ENCODE measurements at regions of chr1 and their contacts with region 1.

Region 1: GRCh38 chr1:10694633-10695627 is 101.5 kb downstream of the CASZ1 start:
- DNase-seq: peak; percentile 90 to 91
- ATAC-seq: peak; percentile 23 to 92 (median 77)
- H3K4me3 ChIP-seq: peak overlapping the region; percentile 21 to 62 (median 56)
- H3K27ac ChIP-seq: peak overlapping the region; percentile 75 to 92 (median 88)
- H3K4me1 ChIP-seq: peaks cover 16 to 66% (median 46%) of the 10 kb centered on the region in 9 donors
- H3K27me3 ChIP-seq: peaks cover 0 to 3% (median 0%) of the 10 kb centered on the region in 7 donors
- CTCF ChIP-seq: no peak

Region 2: DNA sequence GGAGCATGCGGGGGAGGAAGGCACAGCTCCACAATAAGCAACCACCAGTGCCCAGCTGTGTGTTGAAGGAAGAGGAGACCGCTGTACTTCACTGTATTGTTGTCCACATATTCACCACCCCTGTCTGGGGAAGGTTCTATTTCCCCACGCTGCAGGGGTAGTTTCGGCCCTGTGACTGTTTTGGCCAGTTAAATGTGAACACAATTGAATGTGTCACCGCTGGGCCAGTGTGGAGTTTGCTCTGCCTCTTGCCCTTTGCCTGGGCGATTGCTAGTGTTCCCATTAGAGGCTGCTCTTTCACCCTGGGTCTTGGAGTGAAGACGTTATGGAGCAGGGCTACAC is 629.6 kb before region 1 on chr1:
- intact Hi-C with region 1: loop called in 1 of 10 experiments (anchors 10 kb)
- DNase-seq: peak in 1 of 2 donors; percentile 10
- ATAC-seq: peak; percentile 30 to 73 (median 44)
- H3K4me3 ChIP-seq: no peak overlapping the region
- H3K27ac ChIP-seq: peak overlapping the region; percentile 5 to 95 (median 64)
- H3K4me1 ChIP-seq: peaks cover 20 to 66% (median 49%) of the 10 kb centered on the region in 9 donors
- H3K27me3 ChIP-seq: no peaks in the 10 kb centered on the region
- CTCF ChIP-seq: no peak

Region 3: GRCh38 chr1:10652626-10653025 is 42.3 kb before region 1 on chr1:
- intact Hi-C with region 1: loop called in 1 of 10 experiments (anchors 1 kb)
- DNase-seq: no peak
- ATAC-seq: no peak
- H3K4me3 ChIP-seq: no peak overlapping the region
- H3K27ac ChIP-seq: no peak overlapping the region
- H3K4me1 ChIP-seq: peaks cover 0 to 10% (median 0%) of the 10 kb centered on the region in 9 donors
- H3K27me3 ChIP-seq: no peaks in the 10 kb centered on the region
- CTCF ChIP-seq: no peak

Region 4: GRCh38 chr1:10765734-10766478 is 71.0 kb after region 1 on chr1:
- intact Hi-C with region 1: loop called in 1 of 10 experiments (anchors 5 kb)
- DNase-seq: peak in 1 of 2 donors; percentile 38
- ATAC-seq: peak in 6 of 8 donors; percentile 17 to 53 (median 32)
- H3K4me3 ChIP-seq: no peak overlapping the region
- H3K27ac ChIP-seq: peak overlapping the region in 7 of 10 donors; percentile 16 to 88 (median 44)
- H3K4me1 ChIP-seq: peaks cover 27 to 81% (median 68%) of the 10 kb centered on the region in 9 donors
- H3K27me3 ChIP-seq: no peaks in the 10 kb centered on the region
- CTCF ChIP-seq: peak in 1 of 9 donors; percentile 11

Region 5: GRCh38 chr1:10808441-10808840 is 113.5 kb after region 1 on chr1:
- intact Hi-C with region 1: no loop called
- DNase-seq: no peak
- ATAC-seq: no peak
- H3K4me3 ChIP-seq: no peak overlapping the region
- H3K27ac ChIP-seq: no peak overlapping the region
- H3K4me1 ChIP-seq: no peaks in the 10 kb centered on the region
- H3K27me3 ChIP-seq: peaks cover 0 to 46% (median 21%) of the 10 kb centered on the region in 7 donors
- CTCF ChIP-seq: no peak

Region 6: GRCh38 chr1:10960411-10961299 is 265.7 kb after region 1 on chr1:
- intact Hi-C with region 1: loop called in 1 of 10 experiments (anchors 10 kb)
- DNase-seq: peak; percentile 83 to 86
- ATAC-seq: peak; percentile 76 to 89 (median 80)
- H3K4me3 ChIP-seq: peak overlapping the region in 5 of 10 donors; percentile 4 to 22 (median 7)
- H3K27ac ChIP-seq: peak overlapping the region in 8 of 10 donors; percentile 5 to 71 (median 54)
- H3K4me1 ChIP-seq: peaks cover 0 to 22% (median 8%) of the 10 kb centered on the region in 9 donors
- H3K27me3 ChIP-seq: peaks cover 0 to 26% (median 9%) of the 10 kb centered on the region in 7 donors
- CTCF ChIP-seq: peak; percentile 66 to 88 (median 84)

Measured in heart right ventricle (tissue), 16 donors.